Endothelial cell of umbilical vein (primary cell): ENCODE measurements at regions of chr17 and their contacts with region 1.

Region 1: GRCh38 chr17:45021607-45022287 is 29.7 kb downstream of the DCAKD start:
- DNase-seq: peak; percentile 38
- H3K4me3 ChIP-seq: peak overlapping the region in 1 of 3 experiments; percentile 30
- H3K27ac ChIP-seq: no peak overlapping the region
- H3K4me1 ChIP-seq: peaks cover 17% of the 10 kb centered on the region
- H3K27me3 ChIP-seq: no peaks in the 10 kb centered on the region
- CTCF ChIP-seq: peak; percentile 76 to 98
- POLR2A ChIP-seq: no peak

Region 2: GRCh38 chr17:44878627-44879221 is 143.0 kb before region 1 on chr17:
- CTCF ChIA-PET with region 1: interaction called, 19 read pairs
- POLR2A ChIA-PET with region 1: no interaction called
- dilution Hi-C with region 1: no loop called
- intact Hi-C with region 1: no loop called
- DNase-seq: peak; percentile 49
- H3K4me3 ChIP-seq: no peak overlapping the region
- H3K27ac ChIP-seq: no peak overlapping the region
- H3K4me1 ChIP-seq: no peaks in the 10 kb centered on the region
- H3K27me3 ChIP-seq: no peaks in the 10 kb centered on the region
- CTCF ChIP-seq: peak; percentile 35 to 52
- POLR2A ChIP-seq: no peak

Region 3: GRCh38 chr17:44911133-44912001 is 110.4 kb before region 1 on chr17:
- CTCF ChIA-PET with region 1: interaction called, 331 read pairs
- POLR2A ChIA-PET with region 1: no interaction called
- dilution Hi-C with region 1: no loop called
- intact Hi-C with region 1: no loop called
- DNase-seq: peak; percentile 36
- H3K4me3 ChIP-seq: no peak overlapping the region
- H3K27ac ChIP-seq: no peak overlapping the region
- H3K4me1 ChIP-seq: peaks cover 10% of the 10 kb centered on the region
- H3K27me3 ChIP-seq: no peaks in the 10 kb centered on the region
- CTCF ChIP-seq: peak; percentile 23 to 59
- POLR2A ChIP-seq: no peak

Region 4: DNA sequence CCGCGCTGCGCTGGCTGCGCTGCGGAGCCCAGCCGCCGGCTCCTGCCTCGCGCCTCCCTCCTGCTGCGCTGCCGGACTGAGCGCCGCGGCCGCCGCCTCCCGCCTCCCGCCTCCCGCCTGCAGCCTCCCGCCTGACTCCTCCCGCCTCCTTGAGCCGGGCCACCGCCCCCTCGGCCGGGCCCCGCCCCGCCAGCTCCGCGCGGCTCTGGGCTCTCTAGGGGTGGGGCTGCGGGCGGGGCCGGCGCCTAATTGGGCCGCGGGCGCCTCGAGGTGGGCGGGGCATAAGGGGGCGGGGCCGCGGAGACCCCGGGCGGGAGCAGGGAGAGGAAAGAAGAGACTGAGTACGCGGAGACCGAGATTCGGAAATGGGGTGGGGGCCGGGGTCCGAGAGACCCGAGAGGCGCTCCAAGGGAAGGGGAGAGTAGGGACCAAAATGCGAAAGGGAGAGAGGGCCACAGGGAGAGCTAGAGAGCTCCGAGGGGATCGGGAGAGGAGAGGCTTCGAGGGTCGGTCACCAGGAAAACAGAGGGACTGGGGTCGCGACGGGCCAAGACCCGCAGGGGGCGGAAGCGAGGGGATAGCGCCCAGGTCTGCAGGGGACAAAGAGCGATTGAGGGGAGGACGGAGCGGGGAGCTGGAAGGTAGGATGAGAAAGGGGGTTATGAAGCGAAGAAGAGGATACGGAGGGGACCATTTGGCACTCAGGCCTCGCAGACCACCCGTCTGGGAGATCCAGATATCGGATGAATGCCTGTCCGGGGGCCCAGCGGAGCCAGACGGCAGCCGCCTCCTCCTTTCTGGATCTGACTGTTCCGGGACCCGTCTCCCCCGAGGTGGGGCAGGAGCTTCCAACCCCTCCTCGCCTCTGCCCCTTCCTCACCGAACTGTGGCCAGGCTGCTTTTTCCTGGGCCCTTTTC is 53.3 kb before region 1 on chr17 and contains the start of gene C1QL1:
- CTCF ChIA-PET with region 1: interaction called, 10 read pairs
- POLR2A ChIA-PET with region 1: no interaction called
- dilution Hi-C with region 1: no loop called
- intact Hi-C with region 1: loop called (anchors 5 kb)
- DNase-seq: peak; percentile 89
- H3K4me3 ChIP-seq: peak within 1 kb of the TSS; percentile 2 to 51 (median 25)
- H3K27ac ChIP-seq: no peak within 1 kb of the TSS
- H3K4me1 ChIP-seq: peaks cover 8% of the 10 kb centered on the region
- H3K27me3 ChIP-seq: peaks cover 54 to 57% of the 10 kb centered on the region in 2 experiments
- CTCF ChIP-seq: no peak
- POLR2A ChIP-seq: no peak
- total RNA-seq, gene C1QL1: 0.35 TPM in 2 replicates

Region 5: DNA sequence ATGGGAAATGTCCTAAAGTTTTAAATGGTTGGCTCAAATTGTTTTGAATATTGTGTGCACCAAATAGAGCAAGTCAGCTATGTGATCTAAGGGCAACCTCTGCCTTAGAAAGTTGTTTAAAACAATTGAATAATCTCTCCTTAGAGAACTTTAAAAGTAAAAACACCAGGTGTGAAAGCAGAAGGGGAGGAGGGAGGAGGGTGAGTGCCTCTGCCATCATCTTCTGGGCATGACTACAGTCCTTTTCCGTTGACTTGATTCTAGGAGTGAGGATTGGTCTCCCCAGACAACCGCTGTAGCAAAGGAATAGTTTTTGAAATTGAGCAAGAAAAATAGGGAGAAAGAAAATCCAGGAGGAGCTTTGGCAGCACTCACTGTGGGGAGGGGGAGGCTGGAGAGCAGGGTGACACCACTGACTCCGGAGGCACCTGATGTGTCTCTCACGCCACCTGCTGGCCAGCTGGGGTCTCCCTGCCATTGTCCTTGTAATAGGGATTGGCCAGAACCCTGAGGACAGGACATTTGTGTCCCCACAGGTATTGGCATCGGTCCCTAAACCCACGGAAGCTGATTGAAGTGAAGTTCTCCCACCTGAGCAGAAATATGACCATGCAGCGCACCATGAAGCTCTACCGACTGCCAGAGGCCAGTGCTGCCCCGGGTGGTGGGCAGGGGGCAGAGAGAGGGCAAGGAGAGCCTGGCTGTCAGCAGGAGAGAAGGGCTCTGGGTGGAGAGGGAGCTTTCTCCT is 77.3 kb after region 1 on chr17:
- CTCF ChIA-PET with region 1: interaction called, 9 read pairs
- POLR2A ChIA-PET with region 1: no interaction called
- dilution Hi-C with region 1: no loop called
- intact Hi-C with region 1: loop called (anchors 1 kb)
- DNase-seq: peak; percentile 73
- H3K4me3 ChIP-seq: no peak overlapping the region
- H3K27ac ChIP-seq: no peak overlapping the region
- H3K4me1 ChIP-seq: peaks cover under 1% of the 10 kb centered on the region
- H3K27me3 ChIP-seq: no peaks in the 10 kb centered on the region
- CTCF ChIP-seq: peak; percentile 84 to 91
- POLR2A ChIP-seq: no peak